ENCODE measurements at regions of chr6 and their contacts with region 1.

Region 1: DNA sequence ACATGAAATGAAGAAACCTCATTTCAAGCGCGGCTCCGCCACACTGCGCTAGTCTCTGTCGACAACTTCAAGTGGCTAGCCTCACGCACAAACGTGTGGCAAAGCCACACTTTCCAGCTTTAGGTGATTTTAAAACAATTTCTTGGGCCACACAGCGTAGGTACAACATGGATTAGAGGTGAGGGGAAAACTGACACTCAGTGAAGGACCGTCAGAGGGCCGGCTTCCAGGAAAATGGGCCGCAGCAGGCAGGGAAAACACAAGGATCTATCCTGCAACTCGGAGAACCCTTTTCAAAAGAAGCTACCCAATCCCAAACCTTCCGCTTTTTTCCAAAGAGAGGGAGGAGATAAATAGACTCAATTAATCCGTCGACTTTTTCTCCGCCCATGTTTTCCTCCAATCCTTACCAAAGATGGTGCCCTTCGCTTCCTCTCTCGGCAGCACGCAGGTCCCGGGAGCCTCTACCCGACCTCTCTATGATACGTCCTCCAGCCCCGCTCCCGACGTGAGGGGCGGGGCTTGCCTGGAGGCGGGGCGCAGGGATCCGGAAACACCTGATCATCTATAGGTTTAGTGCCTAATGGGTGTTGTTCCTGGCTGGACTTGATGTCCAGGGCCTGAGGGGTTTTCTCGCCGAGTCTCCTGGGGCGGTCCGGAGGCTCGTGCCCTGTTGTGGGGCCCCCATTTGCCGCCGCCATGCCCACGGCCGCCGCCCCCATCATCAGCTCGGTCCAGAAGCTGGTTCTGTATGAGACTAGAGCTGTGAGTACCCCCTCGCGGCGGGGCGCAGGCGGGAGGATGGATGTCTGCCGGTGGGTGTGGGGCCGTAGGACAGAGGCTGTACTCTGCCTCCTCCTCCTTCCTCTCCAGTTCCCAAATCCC is at the starts of genes AK9 and FIG4:
- DNase-seq: peak; percentile 72 to 88 (median 83)
- ATAC-seq: peak; percentile 98
- H3K4me3 ChIP-seq: peak within 1 kb of the TSS; percentile 98
- H3K4me3 Mint-ChIP-seq: peak within 1 kb of the TSS; percentile 91 to 100 (median 96)
- H3K27ac ChIP-seq: peak within 1 kb of the TSS; percentile 74
- H3K27ac Mint-ChIP-seq: peak within 1 kb of the TSS; percentile 92 to 99 (median 96)
- H3K4me1 ChIP-seq: peaks cover 12 to 13% of the 10 kb centered on the region in 2 donors
- H3K4me1 Mint-ChIP-seq: peaks cover 21 to 48% (median 34%) of the 10 kb centered on the region in 7 donors
- H3K27me3 ChIP-seq: no peaks in the 10 kb centered on the region
- H3K27me3 Mint-ChIP-seq: peaks cover 0 to 13% (median 0%) of the 10 kb centered on the region in 5 donors
- total RNA-seq, gene AK9: 5.8 to 19.5 (median 11.5) TPM
- total RNA-seq, gene FIG4: 6.8 to 16.5 (median 13.0) TPM

Region 2: DNA sequence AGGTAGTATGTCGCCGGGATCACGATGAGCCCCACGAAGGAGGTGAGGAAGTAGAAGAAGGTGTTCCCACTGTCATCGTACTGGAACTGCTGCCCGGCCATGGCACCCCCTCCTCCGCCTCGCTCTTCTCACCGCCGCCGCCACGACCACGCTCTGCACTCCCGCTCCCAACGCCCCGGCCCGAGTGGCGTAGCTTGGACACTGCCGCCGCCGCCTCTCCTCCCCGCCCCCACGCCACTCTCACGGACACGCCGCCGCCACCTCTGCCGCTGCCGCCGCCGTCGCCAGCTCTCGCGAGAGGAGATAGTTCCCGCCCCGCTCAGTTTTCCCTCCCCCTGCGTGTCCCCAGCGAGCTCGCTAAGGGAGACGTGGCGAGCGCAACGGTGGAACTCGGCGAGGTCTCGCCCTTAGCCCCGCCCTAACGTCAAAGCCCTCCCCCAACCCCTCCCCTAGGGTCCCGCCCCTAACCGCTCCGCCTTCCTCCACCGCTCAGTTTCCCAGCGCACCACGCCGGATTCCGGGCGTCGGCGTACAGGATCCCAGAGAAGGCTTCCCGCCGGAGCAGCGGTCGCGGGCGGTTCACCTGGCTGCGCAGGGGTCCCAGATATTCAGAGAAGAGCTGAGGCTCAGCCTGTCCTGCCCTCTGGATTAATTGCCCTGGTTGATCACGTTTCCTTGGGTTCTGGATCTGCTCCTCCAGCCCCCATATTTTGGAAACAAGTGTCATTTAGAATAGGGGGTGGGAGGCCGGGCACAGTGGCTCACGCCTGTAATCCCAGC is 1732.9 kb before region 1 on chr6 and contains the start of gene SEC63:
- CTCF ChIA-PET with region 1: no interaction called
- POLR2A ChIA-PET with region 1: no interaction called
- intact Hi-C with region 1: loop called in 1 of 2 experiments (anchors 10 kb)
- DNase-seq: peak; percentile 92 to 97 (median 96)
- ATAC-seq: peak; percentile 100
- H3K4me3 ChIP-seq: peak within 1 kb of the TSS; percentile 96
- H3K4me3 Mint-ChIP-seq: peak within 1 kb of the TSS; percentile 94 to 100 (median 99)
- H3K27ac ChIP-seq: peak within 1 kb of the TSS; percentile 86
- H3K27ac Mint-ChIP-seq: peak within 1 kb of the TSS; percentile 80 to 98 (median 96)
- H3K4me1 ChIP-seq: peaks cover 15 to 17% of the 10 kb centered on the region in 2 donors
- H3K4me1 Mint-ChIP-seq: peaks cover 20 to 35% (median 29%) of the 10 kb centered on the region in 7 donors
- H3K27me3 ChIP-seq: no peaks in the 10 kb centered on the region
- H3K27me3 Mint-ChIP-seq: peaks cover 0 to 5% (median 0%) of the 10 kb centered on the region in 5 donors
- total RNA-seq, gene SEC63: 82.9 to 89.0 (median 86.0) TPM

Region 3: DNA sequence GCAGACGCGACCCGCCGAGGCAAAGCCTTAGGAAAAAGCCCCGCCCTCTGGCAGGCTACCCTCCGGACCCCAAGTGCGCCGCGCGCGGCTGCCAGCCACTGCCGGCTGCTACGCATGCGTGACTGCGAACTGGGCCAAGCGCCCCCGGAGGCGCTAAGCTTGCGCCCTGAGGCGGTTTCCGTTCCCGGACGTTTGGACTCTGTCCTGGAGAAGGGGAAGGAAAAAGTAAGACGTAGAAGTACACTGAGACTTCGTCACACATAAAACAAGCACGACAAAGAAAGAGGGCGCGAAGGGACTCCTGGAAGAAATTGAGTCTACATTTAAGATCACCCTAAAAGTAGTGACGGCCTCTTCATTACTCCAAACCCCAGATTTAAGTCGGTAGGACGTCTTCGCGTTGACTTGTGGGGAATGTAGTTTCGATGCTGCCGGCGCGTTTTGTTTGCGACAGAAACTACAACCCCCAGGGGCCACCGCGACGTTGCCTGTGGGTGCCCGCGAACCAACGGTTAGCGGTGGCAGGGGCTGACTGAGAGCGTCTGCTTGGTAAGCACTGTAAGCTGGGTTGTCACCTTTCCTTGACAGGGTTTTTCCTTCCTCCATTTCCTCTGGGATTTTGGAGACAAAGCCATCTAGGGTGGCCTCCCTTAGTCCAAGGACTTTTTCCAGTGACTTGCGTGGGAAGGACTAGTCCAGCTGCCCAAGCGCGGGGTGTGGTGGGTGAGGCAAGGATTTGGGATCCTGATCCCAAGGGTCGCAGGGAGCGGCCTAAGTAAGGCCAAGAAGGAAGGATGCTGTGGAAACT is 595.7 kb before region 1 on chr6 and contains the start of gene CEP57L1:
- CTCF ChIA-PET with region 1: no interaction called
- POLR2A ChIA-PET with region 1: interaction called, 3 read pairs
- intact Hi-C with region 1: loop called (anchors 1 kb)
- DNase-seq: peak; percentile 88 to 96 (median 94)
- ATAC-seq: peak; percentile 81
- H3K4me3 ChIP-seq: peak within 1 kb of the TSS; percentile 96
- H3K4me3 Mint-ChIP-seq: peak within 1 kb of the TSS; percentile 92 to 98 (median 96)
- H3K27ac ChIP-seq: peak within 1 kb of the TSS; percentile 94
- H3K27ac Mint-ChIP-seq: peak within 1 kb of the TSS; percentile 98 to 99 (median 99)
- H3K4me1 ChIP-seq: peaks cover 21 to 29% of the 10 kb centered on the region in 2 donors
- H3K4me1 Mint-ChIP-seq: peaks cover 26 to 64% (median 54%) of the 10 kb centered on the region in 7 donors
- H3K27me3 ChIP-seq: no peaks in the 10 kb centered on the region
- H3K27me3 Mint-ChIP-seq: no peaks in the 10 kb centered on the region
- total RNA-seq, gene CEP57L1: 3.1 to 17.2 (median 6.5) TPM

Region 4: DNA sequence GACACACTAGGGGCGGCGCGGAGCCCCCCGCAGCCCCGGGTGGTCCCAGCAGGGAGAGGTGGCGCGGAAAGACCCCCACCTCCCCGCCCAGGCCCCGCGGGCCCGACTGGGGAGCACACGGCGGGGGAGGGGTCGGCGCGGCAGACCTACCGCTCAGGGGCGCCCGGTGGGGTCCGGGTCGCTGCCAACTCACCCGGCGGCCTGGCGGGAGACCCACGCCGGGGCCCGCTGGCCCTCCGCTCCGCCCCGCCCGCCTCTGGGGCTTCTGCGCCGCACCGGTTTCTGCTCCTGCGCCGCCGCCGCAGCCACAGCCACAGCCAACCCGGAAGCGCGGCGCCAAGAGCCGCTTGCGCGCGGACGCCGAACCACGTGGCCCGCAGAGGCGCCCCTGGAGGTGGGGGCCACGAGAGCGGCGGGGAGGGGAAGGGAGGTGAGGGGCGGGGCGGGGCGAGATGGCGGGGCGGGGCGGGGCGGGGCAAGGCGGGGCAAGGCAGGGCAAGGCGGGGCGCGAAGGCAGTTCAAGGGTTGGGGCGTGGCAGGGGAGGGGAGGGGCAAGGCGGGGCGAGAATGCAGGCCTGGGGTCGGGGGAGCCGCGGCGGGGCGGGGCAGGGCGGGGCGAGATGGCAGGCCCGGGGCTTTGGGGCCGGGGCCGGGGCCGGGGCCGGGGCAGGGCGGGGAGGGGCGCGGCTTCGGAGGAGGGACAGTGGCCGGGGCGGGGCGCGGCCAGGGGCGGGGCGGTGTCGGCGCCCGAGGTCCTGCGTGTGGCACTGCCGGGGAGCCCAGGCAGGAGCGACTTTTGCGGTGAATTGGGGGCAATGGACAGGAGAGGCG is 207.9 kb before region 1 on chr6 and contains the start of gene ZBTB24:
- CTCF ChIA-PET with region 1: no interaction called
- POLR2A ChIA-PET with region 1: interaction called, 3 read pairs
- intact Hi-C with region 1: loop called (anchors 1 kb)
- DNase-seq: peak; percentile 86 to 92 (median 89)
- ATAC-seq: peak; percentile 94
- H3K4me3 ChIP-seq: peak within 1 kb of the TSS; percentile 79
- H3K4me3 Mint-ChIP-seq: peak within 1 kb of the TSS; percentile 92 to 99 (median 97)
- H3K27ac ChIP-seq: peak within 1 kb of the TSS; percentile 84
- H3K27ac Mint-ChIP-seq: peak within 1 kb of the TSS; percentile 42 to 95 (median 91)
- H3K4me1 ChIP-seq: peaks cover 38 to 39% of the 10 kb centered on the region in 2 donors
- H3K4me1 Mint-ChIP-seq: peaks cover 38 to 55% (median 51%) of the 10 kb centered on the region in 7 donors
- H3K27me3 ChIP-seq: no peaks in the 10 kb centered on the region
- H3K27me3 Mint-ChIP-seq: peaks cover 0 to 7% (median 0%) of the 10 kb centered on the region in 5 donors
- total RNA-seq, gene ZBTB24: 10.2 to 26.6 (median 23.4) TPM

Region 5: GRCh38 chr6:109705258-109705657 is 14.3 kb after region 1 on chr6:
- CTCF ChIA-PET with region 1: interaction called, 5 read pairs
- POLR2A ChIA-PET with region 1: interaction called, 5 read pairs
- intact Hi-C with region 1: loop called (anchors 1 kb)
- DNase-seq: peak; percentile 46 to 74 (median 61)
- ATAC-seq: peak; percentile 99
- H3K4me3 ChIP-seq: no peak overlapping the region
- H3K4me3 Mint-ChIP-seq: no peak overlapping the region
- H3K27ac ChIP-seq: no peak overlapping the region
- H3K27ac Mint-ChIP-seq: no peak overlapping the region
- H3K4me1 ChIP-seq: no peaks in the 10 kb centered on the region
- H3K4me1 Mint-ChIP-seq: peaks cover 7 to 62% (median 38%) of the 10 kb centered on the region in 7 donors
- H3K27me3 ChIP-seq: no peaks in the 10 kb centered on the region
- H3K27me3 Mint-ChIP-seq: no peaks in the 10 kb centered on the region

Region 6: GRCh38 chr6:110101885-110102284 is 410.9 kb after region 1 on chr6:
- CTCF ChIA-PET with region 1: no interaction called
- POLR2A ChIA-PET with region 1: no interaction called
- intact Hi-C with region 1: no loop called
- DNase-seq: no peak
- ATAC-seq: no peak
- H3K4me3 ChIP-seq: no peak overlapping the region
- H3K4me3 Mint-ChIP-seq: no peak overlapping the region
- H3K27ac ChIP-seq: no peak overlapping the region
- H3K27ac Mint-ChIP-seq: no peak overlapping the region
- H3K4me1 ChIP-seq: no peaks in the 10 kb centered on the region
- H3K4me1 Mint-ChIP-seq: peaks cover 0 to 2% (median 0%) of the 10 kb centered on the region in 7 donors
- H3K27me3 ChIP-seq: peaks cover 0 to 3% of the 10 kb centered on the region in 2 donors
- H3K27me3 Mint-ChIP-seq: peaks cover 0 to 4% (median 0%) of the 10 kb centered on the region in 5 donors

Region 7: DNA sequence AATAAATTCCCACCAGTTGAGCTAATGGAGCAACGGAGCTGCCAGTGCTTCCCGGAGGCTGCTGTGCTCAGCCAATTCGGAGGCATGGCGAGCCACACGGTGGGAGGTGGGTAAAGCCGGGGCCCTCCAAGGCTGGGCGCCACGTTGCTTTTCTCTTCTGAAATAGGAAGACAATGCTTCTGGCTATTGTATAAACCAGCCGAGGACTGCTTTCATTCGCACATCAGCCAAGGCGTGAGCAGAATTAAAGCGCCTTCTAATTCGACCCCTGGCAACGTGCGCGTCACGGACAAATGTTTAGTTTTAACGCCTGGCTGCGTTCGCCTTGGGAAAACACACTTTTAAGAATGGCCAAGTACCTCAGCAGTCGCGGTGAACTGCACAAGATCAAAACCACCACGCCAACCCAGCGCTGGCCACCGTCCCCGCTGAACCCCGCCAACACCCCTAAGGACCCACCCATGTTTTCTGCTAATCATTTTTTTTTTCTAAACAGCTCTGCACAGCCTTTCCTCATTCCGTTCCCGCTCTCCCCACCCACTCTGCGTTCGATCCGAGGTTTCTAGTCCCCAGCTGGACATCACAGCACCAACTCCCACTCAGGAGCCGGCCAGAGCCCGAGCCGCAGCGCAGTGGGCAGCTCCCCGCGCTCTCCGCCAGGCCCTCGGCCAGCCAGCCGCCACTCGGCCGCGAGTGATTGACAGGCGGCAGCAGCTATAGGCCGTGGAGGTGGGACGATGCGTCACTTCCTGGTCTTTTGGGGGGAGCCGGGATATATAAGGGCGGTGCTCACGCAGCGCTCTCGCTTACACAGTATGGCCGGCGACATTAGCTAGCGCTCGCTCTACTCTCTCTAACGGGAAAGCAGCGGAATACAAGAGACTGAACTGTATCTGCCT is 1183.3 kb after region 1 on chr6 and contains the start of gene AMD1:
- CTCF ChIA-PET with region 1: no interaction called
- POLR2A ChIA-PET with region 1: no interaction called
- intact Hi-C with region 1: loop called in 1 of 2 experiments (anchors 1 kb)
- DNase-seq: peak; percentile 87 to 97 (median 96)
- ATAC-seq: peak; percentile 85
- H3K4me3 ChIP-seq: peak within 1 kb of the TSS; percentile 99
- H3K4me3 Mint-ChIP-seq: peak within 1 kb of the TSS in 9 of 10 donors; percentile 94 to 99 (median 99)
- H3K27ac ChIP-seq: peak within 1 kb of the TSS; percentile 73
- H3K27ac Mint-ChIP-seq: peak within 1 kb of the TSS in 8 of 9 donors; percentile 96 to 100 (median 99)
- H3K4me1 ChIP-seq: peaks cover 26 to 28% of the 10 kb centered on the region in 2 donors
- H3K4me1 Mint-ChIP-seq: peaks cover 19 to 28% (median 27%) of the 10 kb centered on the region in 7 donors
- H3K27me3 ChIP-seq: no peaks in the 10 kb centered on the region
- H3K27me3 Mint-ChIP-seq: no peaks in the 10 kb centered on the region
- total RNA-seq, gene AMD1: 61.1 to 105 (median 73.8) TPM